Gastrocnemius medialis (tissue), 4 donors: ENCODE measurements at regions of chr21 and their contacts with region 1.

Region 1: GRCh38 chr21:42233067-42233961 is 14.4 kb downstream of the ABCG1 start:
- DNase-seq: peak; percentile 95 to 99
- ATAC-seq: peak; percentile 73 to 83
- H3K4me3 ChIP-seq: peak overlapping the region; percentile 32 to 71 (median 56)
- H3K27ac ChIP-seq: peak overlapping the region; percentile 89 to 99 (median 93)
- H3K4me1 ChIP-seq: peaks cover 90 to 91% of the 10 kb centered on the region in 2 donors
- H3K27me3 ChIP-seq: no peaks in the 10 kb centered on the region
- CTCF ChIP-seq: peak; percentile 30 to 67 (median 39)
- POLR2A ChIP-seq: peak; percentile 27 to 48

Region 2: DNA sequence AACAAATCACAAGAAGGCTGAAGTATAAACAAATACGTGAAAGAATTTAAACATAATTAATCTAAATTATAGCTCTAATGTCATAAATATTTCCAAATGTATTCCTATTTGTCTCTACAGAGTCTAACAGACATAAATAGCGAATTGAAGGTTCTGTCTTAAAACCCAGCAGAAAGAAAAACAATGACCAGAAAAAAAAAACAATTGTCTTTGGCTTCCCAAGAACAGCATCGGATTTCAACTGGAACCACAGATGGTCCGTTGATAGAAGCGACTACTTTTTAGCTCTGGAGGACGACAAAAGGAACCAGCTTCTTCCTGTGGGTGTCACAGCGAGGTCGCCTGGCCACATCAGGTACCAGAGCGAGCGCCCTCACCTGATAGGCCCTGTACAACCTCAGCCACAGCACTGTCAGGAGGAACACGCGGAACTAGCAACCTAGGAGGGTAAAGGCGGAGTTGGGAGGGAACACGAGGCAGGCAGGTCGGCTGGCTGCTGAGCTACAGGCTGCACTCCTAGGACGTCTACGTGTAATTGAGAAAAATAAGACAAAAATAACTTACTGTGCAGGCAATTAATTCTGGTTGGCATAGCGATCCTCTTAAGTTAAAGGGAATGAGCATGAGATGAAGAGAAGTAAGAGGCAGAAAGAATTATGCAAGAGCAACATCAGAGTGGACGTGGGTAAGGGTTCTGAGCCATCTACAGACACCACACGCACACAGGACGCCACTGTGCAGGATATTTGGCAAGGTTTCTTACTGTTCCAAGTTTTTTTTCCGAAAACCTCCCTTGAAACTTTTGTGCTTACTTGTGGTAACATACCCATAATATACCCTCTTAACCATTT is 337.4 kb before region 1 on chr21:
- in situ Hi-C with region 1: no loop called
- intact Hi-C with region 1: no loop called
- DNase-seq: no peak
- ATAC-seq: no peak
- H3K4me3 ChIP-seq: no peak overlapping the region
- H3K27ac ChIP-seq: no peak overlapping the region
- H3K4me1 ChIP-seq: no peaks in the 10 kb centered on the region
- H3K27me3 ChIP-seq: no peaks in the 10 kb centered on the region
- CTCF ChIP-seq: no peak
- POLR2A ChIP-seq: no peak

Region 3: DNA sequence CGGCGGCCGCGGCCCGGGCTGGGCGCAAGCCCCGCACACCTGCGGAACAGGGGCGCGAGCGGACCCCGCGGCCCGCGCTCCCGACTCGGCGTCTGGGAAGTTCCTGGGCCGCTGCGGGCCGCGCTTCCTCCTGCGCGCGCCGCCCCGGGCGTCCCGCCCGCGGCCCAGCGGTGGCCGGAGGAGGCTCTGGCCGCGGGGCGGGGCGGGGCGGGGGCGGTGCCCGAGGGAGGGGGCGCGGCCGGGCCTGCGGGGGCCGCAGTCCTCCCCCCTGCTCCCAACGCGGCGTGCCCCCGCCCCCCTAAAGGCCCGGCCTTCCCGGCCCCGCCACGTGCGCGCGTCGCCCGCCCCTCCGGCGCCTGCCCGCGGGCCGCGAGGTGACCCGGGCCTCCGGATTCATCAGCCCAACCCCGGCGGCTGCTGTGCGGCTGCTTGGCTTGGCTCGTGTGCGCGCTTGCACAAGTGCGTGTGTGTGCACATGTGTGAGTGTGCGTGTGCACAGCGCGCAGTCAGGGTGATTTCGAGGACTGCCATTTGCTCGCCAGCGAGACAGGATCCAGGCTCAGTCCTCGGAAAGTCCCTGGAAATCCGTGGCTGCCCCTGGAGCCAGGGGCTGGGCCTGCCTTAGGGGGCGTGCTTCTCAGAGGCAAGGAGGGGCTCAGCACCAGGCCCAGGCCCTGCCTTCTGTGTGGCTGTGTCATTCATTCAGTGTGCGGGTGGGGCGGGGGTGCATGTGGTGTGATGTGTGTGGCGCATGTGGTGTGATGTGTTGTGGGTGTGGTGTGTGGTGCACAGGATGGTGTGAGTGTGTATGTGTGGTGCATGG is 279.3 kb before region 1 on chr21 and contains the start of gene C2CD2:
- in situ Hi-C with region 1: no loop called
- intact Hi-C with region 1: loop called (anchors 10 kb)
- DNase-seq: no peak
- ATAC-seq: peak; percentile 60 to 67
- H3K4me3 ChIP-seq: peak within 1 kb of the TSS; percentile 61 to 68 (median 62)
- H3K27ac ChIP-seq: peak within 1 kb of the TSS; percentile 53 to 71 (median 64)
- H3K4me1 ChIP-seq: peaks cover 33 to 38% of the 10 kb centered on the region in 2 donors
- H3K27me3 ChIP-seq: peaks cover 0 to 17% (median 0%) of the 10 kb centered on the region in 3 donors
- CTCF ChIP-seq: no peak
- POLR2A ChIP-seq: peak; percentile 56 to 60
- total RNA-seq, gene C2CD2: 1.7 to 7.2 (median 2.4) TPM

Region 4: DNA sequence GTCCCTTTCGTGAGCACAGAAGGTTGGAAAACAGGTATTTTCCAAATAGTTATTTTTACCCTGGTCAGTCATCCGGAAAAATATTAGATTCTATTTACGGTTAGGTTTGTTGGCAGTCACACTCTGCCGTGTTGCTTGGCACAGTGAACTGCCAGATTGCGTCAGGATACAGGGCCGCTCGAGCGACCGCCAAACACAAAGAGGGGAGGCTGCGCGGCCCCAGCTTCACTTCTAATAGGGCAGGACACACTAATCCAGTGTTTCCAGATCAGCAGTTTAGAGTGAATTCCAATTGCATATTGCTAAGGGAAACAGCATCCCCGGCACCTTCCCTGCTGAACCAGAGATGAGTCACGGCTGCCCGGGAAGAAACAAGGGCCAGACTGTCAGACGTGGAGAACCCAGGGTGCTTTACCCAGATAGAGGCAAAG is 139.3 kb before region 1 on chr21:
- in situ Hi-C with region 1: no loop called
- intact Hi-C with region 1: loop called (anchors 5 kb)
- DNase-seq: peak in 1 of 2 donors; percentile 39
- ATAC-seq: peak; percentile 74 to 83
- H3K4me3 ChIP-seq: no peak overlapping the region
- H3K27ac ChIP-seq: peak overlapping the region in 3 of 4 donors; percentile 14 to 66 (median 40)
- H3K4me1 ChIP-seq: no peaks in the 10 kb centered on the region
- H3K27me3 ChIP-seq: peaks cover 0 to 7% (median 6%) of the 10 kb centered on the region in 3 donors
- CTCF ChIP-seq: no peak
- POLR2A ChIP-seq: no peak

Region 5: DNA sequence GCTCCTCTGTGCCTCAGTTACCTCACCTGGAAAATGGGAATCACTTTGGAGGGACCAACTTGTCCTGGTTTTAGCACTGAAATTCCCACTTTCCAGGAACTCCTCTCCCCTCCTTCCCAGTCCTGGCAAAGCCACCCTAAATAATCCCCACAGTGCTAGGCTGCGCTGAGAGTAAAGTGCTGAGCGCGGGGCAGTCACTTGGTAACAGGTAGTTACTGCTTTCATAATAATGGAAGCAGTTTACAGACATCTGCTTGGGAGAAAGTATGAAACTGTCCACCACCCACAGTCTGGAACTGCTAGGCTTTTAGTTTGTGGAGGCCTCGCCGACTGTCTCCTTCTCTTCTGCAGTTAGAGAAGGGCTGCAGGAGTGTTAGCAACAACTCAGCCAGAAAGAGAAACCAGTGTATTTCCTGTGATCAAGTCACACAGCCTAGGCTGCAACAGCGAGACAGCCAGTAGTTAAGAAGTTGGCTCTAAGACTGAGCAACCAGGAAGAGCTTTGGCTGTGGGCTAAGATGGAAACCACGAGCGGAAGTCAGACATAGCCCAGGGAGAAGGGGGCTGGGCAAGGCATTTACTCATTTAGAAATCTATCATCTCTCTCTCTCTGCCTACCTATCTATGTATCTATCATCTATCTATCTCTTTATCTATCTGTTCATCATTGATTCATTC is 45.2 kb before region 1 on chr21:
- in situ Hi-C with region 1: no loop called
- intact Hi-C with region 1: no loop called
- DNase-seq: peak; percentile 10 to 38
- ATAC-seq: peak; percentile 51 to 60
- H3K4me3 ChIP-seq: no peak overlapping the region
- H3K27ac ChIP-seq: peak overlapping the region in 3 of 4 donors; percentile 29 to 57 (median 47)
- H3K4me1 ChIP-seq: peaks cover 0 to 7% of the 10 kb centered on the region in 2 donors
- H3K27me3 ChIP-seq: no peaks in the 10 kb centered on the region
- CTCF ChIP-seq: no peak
- POLR2A ChIP-seq: no peak

Region 6: DNA sequence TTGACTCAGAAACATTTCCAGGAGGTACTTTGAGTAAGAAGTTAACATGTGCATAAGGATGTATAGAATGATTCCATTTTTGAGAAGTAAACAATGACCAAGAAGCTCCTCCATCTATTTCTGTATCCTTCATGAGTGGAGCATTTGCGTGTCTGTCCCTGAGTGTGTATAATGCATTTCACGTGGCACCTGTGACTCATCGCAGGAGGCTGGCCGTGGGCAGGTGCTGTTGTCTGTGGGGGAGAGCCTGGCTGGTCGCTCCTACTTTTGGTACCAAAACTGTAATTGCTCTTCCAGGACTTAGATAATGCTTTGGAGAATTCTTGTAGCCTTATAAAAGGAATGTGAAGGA is 296.8 kb after region 1 on chr21:
- in situ Hi-C with region 1: no loop called
- intact Hi-C with region 1: loop called (anchors 2 kb)
- DNase-seq: peak in 1 of 2 donors; percentile 60
- ATAC-seq: no peak
- H3K4me3 ChIP-seq: no peak overlapping the region
- H3K27ac ChIP-seq: peak overlapping the region; percentile 85 to 96 (median 88)
- H3K4me1 ChIP-seq: peaks cover 62 to 82% of the 10 kb centered on the region in 2 donors
- H3K27me3 ChIP-seq: no peaks in the 10 kb centered on the region
- CTCF ChIP-seq: no peak
- POLR2A ChIP-seq: peak; percentile 37 to 48